Posterior cingulate gyrus (tissue), 11 donors: ENCODE measurements at regions of chr7 and their contacts with region 1.

Region 1: GRCh38 chr7:66740302-66740979 is at the start of gene RABGEF1:
- DNase-seq: peak; percentile 96 to 100 (median 98)

Region 2: GRCh38 chr7:66557608-66558143 is 182.8 kb before region 1 on chr7:
- intact Hi-C with region 1: loop called (anchors 5 kb)
- DNase-seq: peak; percentile 53 to 97 (median 82)

Region 3: DNA sequence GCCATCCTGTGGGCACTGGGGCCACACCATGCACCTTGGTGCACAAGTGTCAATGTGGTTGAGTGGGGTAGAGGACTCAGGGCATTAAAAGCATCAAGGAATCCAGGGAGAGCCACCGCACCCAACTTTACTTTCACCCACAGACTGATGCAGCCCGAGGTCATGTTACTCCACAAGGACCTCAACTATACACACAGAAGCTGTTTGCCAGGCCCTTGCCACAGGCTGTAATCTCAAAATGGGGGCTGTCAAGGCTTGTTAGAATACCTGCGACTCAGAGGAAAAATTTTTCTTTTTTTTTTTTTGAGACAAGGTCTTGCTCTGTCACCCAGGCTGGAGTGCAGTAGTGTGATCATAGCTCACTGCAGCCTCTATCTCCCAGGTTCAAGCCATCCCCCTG is 138.3 kb before region 1 on chr7:
- intact Hi-C with region 1: no loop called
- DNase-seq: peak in 1 of 10 donors; percentile 23

Region 4: DNA sequence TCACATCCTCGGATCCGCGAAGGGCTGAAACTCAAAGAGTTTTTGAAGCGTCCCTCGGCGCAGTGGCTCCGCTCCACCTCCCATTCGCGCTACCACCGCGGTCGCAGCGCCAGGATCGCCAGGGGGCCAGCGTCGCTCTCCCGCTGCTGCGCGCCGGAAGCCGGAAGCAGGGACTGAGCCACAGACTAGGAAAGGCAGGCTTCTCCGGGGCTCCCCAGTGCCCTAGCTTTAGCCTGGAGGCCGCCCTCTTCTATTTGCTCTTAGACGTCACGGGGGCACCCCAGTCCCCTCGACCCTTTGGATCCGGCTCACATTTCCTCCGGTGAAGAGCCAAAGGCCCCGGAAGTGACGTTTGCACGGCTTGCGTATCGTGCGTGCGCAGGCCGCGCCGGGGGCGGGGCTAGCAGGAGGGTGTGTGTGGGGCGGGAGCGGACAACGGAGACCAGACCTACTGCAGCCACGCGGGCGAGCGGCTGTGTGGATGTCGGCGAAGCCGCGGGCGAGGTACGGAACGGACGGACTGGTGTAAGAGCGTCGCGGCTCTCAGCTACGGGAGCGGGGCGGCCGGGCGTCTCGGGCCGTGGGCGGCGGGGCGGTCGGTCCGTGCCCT is 86.2 kb before region 1 on chr7:
- intact Hi-C with region 1: loop called (anchors 1 kb)
- DNase-seq: peak; percentile 97 to 100 (median 98)

Region 5: GRCh38 chr7:66681491-66682349 is 58.7 kb before region 1 on chr7:
- intact Hi-C with region 1: loop called (anchors 5 kb)
- DNase-seq: peak; percentile 93 to 99 (median 98)

Region 6: DNA sequence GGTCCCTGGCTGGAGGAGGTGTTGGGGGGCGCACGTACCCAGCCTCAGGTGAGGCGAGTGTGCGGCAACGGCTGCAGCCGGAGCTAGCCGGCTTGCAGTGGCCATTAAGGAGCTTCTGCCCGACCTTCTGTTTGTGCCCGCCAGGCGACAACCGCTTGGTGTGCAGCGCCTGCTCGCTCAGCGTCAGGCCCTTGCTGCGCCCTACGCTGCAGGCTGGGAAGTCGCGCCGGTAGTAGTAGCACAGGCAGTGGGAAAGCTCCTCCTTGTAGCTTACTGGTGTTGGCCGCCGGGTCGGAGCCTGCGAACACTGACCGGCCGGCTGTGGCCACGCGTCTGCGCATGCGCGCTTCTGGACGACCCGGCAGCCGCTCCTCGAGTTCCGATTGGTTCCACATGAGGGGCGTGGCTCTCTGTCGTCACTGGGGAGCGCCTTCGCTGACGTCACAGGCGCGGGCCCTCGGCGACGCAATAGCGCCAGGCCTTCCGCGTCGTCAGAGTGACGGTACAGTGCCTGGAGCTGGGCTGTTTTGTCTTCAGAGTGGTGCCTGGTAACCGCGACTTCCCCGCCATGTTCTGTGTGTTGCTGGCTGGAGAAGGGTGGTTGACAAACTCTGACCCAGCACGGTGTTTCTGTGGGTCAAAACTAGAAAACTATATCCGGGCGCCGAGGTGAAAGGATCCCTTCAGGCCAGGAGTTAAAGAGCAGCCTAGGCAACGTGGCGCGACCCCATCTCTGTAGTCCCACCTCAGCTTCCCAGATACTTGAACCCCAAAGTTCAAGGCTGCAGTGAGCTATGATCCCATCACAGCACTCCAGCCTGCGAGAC is 104.3 kb after region 1 on chr7:
- intact Hi-C with region 1: loop called (anchors 10 kb)
- DNase-seq: peak; percentile 95 to 100 (median 98)